ENCODE measurements at regions of chr5 and their contacts with region 1.

Region 1: DNA sequence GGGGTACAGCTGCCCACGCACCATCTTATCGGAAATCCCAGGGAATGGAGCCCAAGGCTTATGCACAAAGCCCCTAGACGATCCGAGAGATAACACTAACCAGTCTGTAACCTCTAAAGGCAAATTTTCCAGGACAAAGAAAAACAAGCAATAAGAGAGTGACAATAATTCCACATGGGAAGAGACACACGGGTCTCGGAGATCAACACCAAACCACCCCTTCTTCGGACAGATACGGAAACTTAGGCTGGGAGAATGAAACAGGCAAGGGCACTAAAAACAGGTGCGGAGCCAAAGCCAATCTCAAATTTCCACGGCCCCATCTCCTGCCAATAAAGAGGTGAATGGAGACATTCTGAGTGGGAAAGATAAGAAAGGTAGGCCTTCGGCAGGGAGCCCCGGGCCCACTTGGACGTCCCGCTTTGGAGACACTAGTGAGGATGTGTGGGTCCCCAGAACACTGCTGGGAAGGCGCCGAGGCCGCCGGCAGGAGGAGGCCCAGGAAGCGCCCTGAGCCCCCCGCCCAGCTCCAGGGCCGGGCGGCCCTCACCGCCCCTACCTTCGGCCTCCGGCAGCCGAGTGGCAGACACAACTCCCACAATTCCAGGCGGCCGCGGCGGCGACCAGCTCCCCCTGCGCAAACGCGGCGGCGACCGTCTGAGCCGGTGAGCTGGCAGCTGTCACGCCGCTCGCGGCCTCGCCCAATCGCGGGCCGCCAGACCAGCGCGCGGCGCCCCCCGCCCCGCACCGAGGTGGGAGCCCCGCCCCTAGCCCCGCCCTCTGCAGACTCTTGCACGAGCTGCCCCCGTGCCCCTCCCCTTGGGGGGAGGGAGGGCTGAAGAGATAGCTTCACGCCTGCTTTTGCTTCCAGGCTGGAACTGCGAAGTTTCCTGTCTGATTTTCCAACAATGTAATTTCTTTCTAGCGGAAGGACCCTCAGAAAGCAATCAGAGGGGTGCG is at the start of gene SIL1:
- DNase-seq: peak; percentile 82
- ATAC-seq: peak; percentile 98
- H3K4me3 ChIP-seq: peak within 1 kb of the TSS; percentile 81 to 96
- H3K27ac ChIP-seq: peak within 1 kb of the TSS; percentile 80
- H3K4me1 ChIP-seq: peaks cover 7 to 13% of the 10 kb centered on the region in 2 experiments; a peak in 3 of 4 replicates
- H3K27me3 ChIP-seq: no peaks in the 10 kb centered on the region
- CTCF ChIP-seq: no peak
- POLR2A ChIP-seq: peak; percentile 83
- RAD21 ChIP-seq: no peak
- total RNA-seq, gene SIL1: 34.0 TPM

Region 2: GRCh38 chr5:138975098-138975847 is 222.7 kb before region 1 on chr5:
- CTCF ChIA-PET with region 1: no interaction called
- POLR2A ChIA-PET with region 1: no interaction called
- RAD21 ChIA-PET with region 1: no interaction called
- intact Hi-C with region 1: no loop called
- DNase-seq: no peak
- ATAC-seq: no peak
- H3K4me3 ChIP-seq: no peak overlapping the region
- H3K27ac ChIP-seq: no peak overlapping the region
- H3K4me1 ChIP-seq: peaks cover 2 to 21% of the 10 kb centered on the region in 2 experiments; a peak in 3 of 4 replicates
- H3K27me3 ChIP-seq: no peaks in the 10 kb centered on the region
- CTCF ChIP-seq: no peak
- POLR2A ChIP-seq: no peak
- RAD21 ChIP-seq: no peak

Region 3: GRCh38 chr5:139182528-139183296 is 15.3 kb before region 1 on chr5:
- CTCF ChIA-PET with region 1: interaction called, 4 read pairs
- POLR2A ChIA-PET with region 1: interaction called, 11 read pairs
- RAD21 ChIA-PET with region 1: no interaction called
- intact Hi-C with region 1: no loop called
- DNase-seq: no peak
- ATAC-seq: no peak
- H3K4me3 ChIP-seq: no peak overlapping the region
- H3K27ac ChIP-seq: no peak overlapping the region
- H3K4me1 ChIP-seq: peaks cover 14 to 21% of the 10 kb centered on the region in 2 experiments
- H3K27me3 ChIP-seq: no peaks in the 10 kb centered on the region
- CTCF ChIP-seq: no peak
- POLR2A ChIP-seq: no peak
- RAD21 ChIP-seq: no peak

Region 4: GRCh38 chr5:139222335-139222734 is 24.3 kb after region 1 on chr5:
- CTCF ChIA-PET with region 1: no interaction called
- POLR2A ChIA-PET with region 1: no interaction called
- RAD21 ChIA-PET with region 1: no interaction called
- intact Hi-C with region 1: no loop called
- DNase-seq: no peak
- ATAC-seq: no peak
- H3K4me3 ChIP-seq: no peak overlapping the region
- H3K27ac ChIP-seq: no peak overlapping the region
- H3K4me1 ChIP-seq: no peaks in the 10 kb centered on the region
- H3K27me3 ChIP-seq: no peaks in the 10 kb centered on the region
- CTCF ChIP-seq: no peak
- POLR2A ChIP-seq: no peak
- RAD21 ChIP-seq: no peak

Region 5: GRCh38 chr5:139371482-139372435 is 173.8 kb after region 1 on chr5:
- CTCF ChIA-PET with region 1: no interaction called
- POLR2A ChIA-PET with region 1: no interaction called
- RAD21 ChIA-PET with region 1: no interaction called
- intact Hi-C with region 1: loop called (anchors 10 kb)
- DNase-seq: no peak
- ATAC-seq: no peak
- H3K4me3 ChIP-seq: no peak overlapping the region
- H3K27ac ChIP-seq: peak overlapping the region; percentile 3; the same call in 1 of the 2 replicates
- H3K4me1 ChIP-seq: peaks cover 28 to 29% of the 10 kb centered on the region in 2 experiments
- H3K27me3 ChIP-seq: no peaks in the 10 kb centered on the region
- CTCF ChIP-seq: no peak
- POLR2A ChIP-seq: no peak
- RAD21 ChIP-seq: no peak

Measured in HCT116 (cell line).